Endothelial cell of umbilical vein (primary cell): ENCODE measurements at regions of chr9 and their contacts with region 1.

Region 1: DNA sequence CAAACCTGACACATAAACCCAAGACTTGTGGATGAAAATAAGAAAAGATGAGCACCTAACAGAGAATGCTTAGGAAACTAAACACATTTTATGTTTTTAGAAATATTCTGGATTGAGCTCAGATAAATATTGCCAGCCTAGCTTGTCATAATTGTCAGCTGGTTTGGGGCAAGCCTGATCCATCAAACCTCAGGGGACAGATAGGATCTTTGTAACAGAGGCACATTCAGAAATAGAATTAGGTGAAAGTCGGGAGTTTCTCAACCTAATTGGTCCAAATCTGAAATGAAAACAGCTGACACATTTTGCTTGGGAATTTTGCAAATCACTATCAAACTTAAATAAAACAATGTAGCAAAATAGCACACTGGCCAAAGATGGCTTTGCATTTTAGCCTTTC is 503.7 kb downstream of the ANXA1 start:
- DNase-seq: no peak
- H3K4me3 ChIP-seq: no peak overlapping the region
- H3K27ac ChIP-seq: no peak overlapping the region
- H3K4me1 ChIP-seq: no peaks in the 10 kb centered on the region
- H3K27me3 ChIP-seq: no peaks in the 10 kb centered on the region
- CTCF ChIP-seq: no peak
- POLR2A ChIP-seq: no peak

Region 2: DNA sequence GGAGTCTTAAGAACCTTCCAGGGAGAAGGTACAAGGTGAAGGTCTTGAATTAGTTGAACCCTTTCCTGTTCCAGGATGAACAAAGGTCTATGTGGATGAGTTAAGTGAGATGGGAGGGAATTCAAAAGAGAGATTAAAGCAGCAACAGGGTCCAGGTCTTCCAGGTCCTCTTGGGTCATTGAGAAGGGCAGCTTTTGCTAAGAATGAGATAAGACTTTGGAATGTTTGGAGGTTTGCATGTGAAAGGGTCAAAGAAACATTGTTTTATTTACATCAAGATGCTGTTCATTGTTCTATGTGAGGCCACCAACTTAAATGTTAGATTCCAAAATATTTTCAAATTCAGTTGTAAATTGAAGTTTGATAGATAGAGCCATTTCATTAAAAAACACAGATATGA is 39.8 kb before region 1 on chr9:
- CTCF ChIA-PET with region 1: no interaction called
- POLR2A ChIA-PET with region 1: no interaction called
- dilution Hi-C with region 1: no loop called
- intact Hi-C with region 1: loop called (anchors 5 kb)
- DNase-seq: no peak
- H3K4me3 ChIP-seq: no peak overlapping the region
- H3K27ac ChIP-seq: no peak overlapping the region
- H3K4me1 ChIP-seq: no peaks in the 10 kb centered on the region
- H3K27me3 ChIP-seq: no peaks in the 10 kb centered on the region
- CTCF ChIP-seq: no peak
- POLR2A ChIP-seq: no peak